ENCODE measurements at regions of chr1 and their contacts with region 1.

Region 1: GRCh38 chr1:206663832-206664652 is 20.7 kb upstream of the MAPKAPK2 start:
- DNase-seq: peak; percentile 87
- H3K4me3 Mint-ChIP-seq: peak overlapping the region; percentile 10
- H3K27ac Mint-ChIP-seq: no peak overlapping the region
- H3K4me1 Mint-ChIP-seq: peaks cover 38% of the 10 kb centered on the region
- H3K27me3 Mint-ChIP-seq: peaks cover 18% of the 10 kb centered on the region

Region 2: DNA sequence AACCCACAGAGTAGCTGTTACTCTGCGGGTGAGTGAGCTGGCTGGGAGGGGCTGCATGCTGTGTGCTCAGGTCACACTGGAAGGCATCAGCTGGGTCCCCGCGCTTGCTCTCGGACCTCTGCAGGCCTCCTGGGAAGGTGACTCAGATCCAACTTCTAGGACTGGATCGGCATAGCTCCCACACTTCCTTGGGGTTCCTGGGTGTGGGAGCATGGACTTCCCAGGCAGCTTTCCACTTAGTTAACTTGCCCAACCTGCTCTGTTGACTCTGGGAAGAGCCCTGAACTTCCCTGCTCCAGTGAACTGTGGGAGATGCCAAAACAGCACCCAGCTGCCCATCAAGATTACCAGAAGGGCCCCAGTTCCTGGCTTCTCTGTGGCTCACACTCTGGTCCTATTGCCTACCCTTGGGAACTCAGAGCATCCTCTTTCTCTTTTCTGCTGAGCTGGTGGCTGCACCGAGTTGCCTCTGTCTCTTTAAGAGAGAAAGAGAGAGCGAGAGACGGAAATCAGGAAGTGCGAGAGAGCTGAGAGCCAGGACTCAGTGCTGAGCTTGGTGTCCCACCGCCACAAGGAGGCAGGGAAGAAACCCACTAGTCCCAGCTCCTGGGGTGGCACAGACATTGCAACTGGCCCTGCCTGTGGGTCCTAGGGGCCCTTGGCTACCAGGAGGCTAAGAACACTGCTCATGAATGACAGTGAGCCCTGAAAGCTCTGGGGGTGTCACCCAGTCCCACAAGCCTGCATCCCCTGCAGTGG is 193.9 kb before region 1 on chr1 and contains the start of gene IKBKE:
- CTCF ChIA-PET with region 1: interaction called, 18 read pairs
- intact Hi-C with region 1: no loop called
- DNase-seq: peak; percentile 66
- H3K4me3 Mint-ChIP-seq: peak within 1 kb of the TSS; percentile 80
- H3K27ac Mint-ChIP-seq: peak within 1 kb of the TSS; percentile 89
- H3K4me1 Mint-ChIP-seq: peaks cover 89% of the 10 kb centered on the region
- H3K27me3 Mint-ChIP-seq: no peaks in the 10 kb centered on the region
- total RNA-seq, gene IKBKE: 7.0 to 8.6 TPM

Region 3: GRCh38 chr1:206507284-206508129 is 156.5 kb before region 1 on chr1 and contains the start of gene RASSF5:
- CTCF ChIA-PET with region 1: interaction called, 19 read pairs
- intact Hi-C with region 1: loop called (anchors 1 kb)
- DNase-seq: peak; percentile 92
- H3K4me3 Mint-ChIP-seq: peak within 1 kb of the TSS; percentile 74
- H3K27ac Mint-ChIP-seq: peak within 1 kb of the TSS; percentile 55
- H3K4me1 Mint-ChIP-seq: peaks cover 45% of the 10 kb centered on the region
- H3K27me3 Mint-ChIP-seq: peaks cover 22% of the 10 kb centered on the region
- total RNA-seq, gene RASSF5: 257 to 258 TPM

Region 4: GRCh38 chr1:206590025-206590758 is 73.8 kb before region 1 on chr1:
- CTCF ChIA-PET with region 1: interaction called, 20 read pairs
- intact Hi-C with region 1: loop called (anchors 1 kb)
- DNase-seq: peak; percentile 89
- H3K4me3 Mint-ChIP-seq: peak overlapping the region; percentile 52
- H3K27ac Mint-ChIP-seq: peak overlapping the region; percentile 100
- H3K4me1 Mint-ChIP-seq: peaks cover 72% of the 10 kb centered on the region
- H3K27me3 Mint-ChIP-seq: no peaks in the 10 kb centered on the region

Region 5: DNA sequence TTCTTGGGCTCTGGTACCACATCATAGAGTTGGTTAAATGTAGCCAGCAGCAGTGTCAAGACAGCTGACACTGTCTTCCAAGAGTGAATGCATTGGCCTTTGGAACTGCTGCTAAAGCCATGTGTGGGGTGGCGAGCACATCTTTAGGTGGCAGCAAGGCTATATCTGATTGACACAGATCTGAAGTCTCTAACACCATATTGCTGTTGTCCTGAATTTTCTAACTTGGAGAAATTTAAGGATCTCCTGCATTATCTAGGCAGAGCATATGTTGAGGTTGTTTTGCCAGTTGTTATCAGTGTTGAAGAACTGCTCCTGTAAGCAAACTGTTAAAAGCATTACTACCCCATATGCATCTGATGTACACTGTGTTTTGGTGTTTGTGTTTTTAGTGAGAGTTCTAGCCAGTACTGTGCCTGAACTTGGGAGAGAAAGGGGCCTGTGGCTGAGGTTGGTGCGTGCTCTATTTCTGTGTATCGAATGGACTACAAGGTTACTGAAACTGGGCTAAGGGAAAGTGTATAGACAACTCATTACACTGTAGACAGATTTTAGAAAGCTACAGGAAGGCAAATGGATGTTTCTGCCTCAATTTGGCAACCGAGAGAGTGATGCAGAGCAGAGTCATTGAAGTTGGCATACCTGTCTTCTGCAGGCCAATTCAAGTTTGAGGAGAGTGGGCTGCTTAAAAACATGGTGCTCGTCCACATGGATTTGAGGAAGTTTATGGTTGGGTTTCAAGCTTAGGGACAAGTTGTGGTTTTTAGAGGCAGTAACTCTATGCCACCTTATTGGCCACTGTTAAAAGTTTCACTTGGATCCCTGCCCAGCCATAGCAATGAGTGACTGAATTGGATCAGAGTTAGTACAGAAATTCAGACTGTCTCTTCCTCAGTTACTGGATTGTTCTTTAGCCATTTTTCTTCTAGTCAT is 11.8 kb before region 1 on chr1:
- CTCF ChIA-PET with region 1: interaction called, 54 read pairs
- intact Hi-C with region 1: no loop called
- DNase-seq: no peak
- H3K4me3 Mint-ChIP-seq: no peak overlapping the region
- H3K27ac Mint-ChIP-seq: no peak overlapping the region
- H3K4me1 Mint-ChIP-seq: no peaks in the 10 kb centered on the region
- H3K27me3 Mint-ChIP-seq: peaks cover 6% of the 10 kb centered on the region

Region 6: DNA sequence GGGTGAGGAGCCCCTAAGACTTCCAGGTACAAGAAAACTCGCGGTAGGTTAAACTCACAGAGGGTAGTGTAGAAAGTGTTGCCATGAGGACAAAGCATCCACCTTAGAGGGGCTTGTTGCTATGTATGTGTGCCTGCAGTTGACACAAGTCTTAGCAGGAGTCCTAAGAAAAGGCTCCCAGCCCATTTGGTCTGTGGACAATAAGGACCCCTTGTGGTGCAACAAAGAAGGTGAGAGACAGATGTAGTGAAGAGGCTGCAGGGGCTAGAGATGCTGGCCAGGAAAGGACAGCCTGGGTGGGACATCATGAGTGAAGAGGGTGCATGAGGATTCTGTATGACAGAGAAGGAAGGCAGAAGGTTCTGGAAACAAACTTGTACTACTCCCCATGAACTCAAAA is 144.6 kb after region 1 on chr1:
- CTCF ChIA-PET with region 1: interaction called, 23 read pairs
- intact Hi-C with region 1: loop called (anchors 1 kb)
- DNase-seq: peak; percentile 70
- H3K4me3 Mint-ChIP-seq: no peak overlapping the region
- H3K27ac Mint-ChIP-seq: no peak overlapping the region
- H3K4me1 Mint-ChIP-seq: peaks cover 42% of the 10 kb centered on the region
- H3K27me3 Mint-ChIP-seq: no peaks in the 10 kb centered on the region

Region 7: DNA sequence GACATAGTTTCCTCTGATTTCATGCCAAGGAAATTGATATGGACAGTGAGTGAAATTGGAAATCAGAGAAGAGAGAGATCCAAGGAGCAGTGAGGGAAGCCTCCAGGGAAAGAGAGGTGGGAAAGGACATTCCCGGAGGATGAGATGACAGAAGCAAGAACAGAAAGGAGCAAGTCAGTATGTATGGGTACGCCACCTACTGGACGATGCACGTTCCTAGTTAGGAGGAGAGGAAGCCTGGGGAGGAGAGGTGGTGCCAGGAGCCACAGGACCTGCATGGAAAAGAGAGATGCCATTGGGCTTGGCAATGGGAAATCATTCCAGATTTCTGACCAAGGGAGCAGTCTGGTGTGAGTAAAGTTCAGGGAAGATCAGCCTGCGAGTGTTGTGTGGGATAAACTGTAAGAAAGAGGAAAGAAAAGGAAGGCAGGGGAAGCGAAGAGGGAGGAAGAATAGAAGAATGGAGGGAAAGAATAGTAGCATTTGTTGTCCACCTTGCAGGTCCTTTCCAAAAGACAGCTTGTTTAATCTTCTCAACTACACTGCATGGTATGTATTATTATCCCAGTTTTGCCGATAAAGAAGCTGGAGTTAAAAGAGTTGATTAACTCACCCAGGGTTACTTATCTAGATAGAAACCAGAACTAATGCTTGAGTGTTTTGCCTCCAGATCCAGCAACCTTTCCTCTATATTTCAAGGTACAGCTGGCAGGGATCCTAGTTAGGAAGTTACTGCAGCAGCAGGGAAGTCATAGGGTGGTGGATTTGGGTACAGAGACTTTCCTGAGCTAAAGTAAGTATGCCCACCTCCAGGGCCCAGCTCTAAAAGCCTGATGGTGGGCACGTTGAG is 341.2 kb after region 1 on chr1:
- CTCF ChIA-PET with region 1: no interaction called
- intact Hi-C with region 1: no loop called
- DNase-seq: peak; percentile 62
- H3K4me3 Mint-ChIP-seq: no peak overlapping the region
- H3K27ac Mint-ChIP-seq: no peak overlapping the region
- H3K4me1 Mint-ChIP-seq: peaks cover 2% of the 10 kb centered on the region
- H3K27me3 Mint-ChIP-seq: peaks cover 2% of the 10 kb centered on the region

Measured in activated naive CD4-positive, alpha-beta T cell treated with anti-CD3 and anti-CD28 coated beads for 36 hours (primary cell).